ENCODE measurements at regions of chr20 and their contacts with region 1.

Region 1: DNA sequence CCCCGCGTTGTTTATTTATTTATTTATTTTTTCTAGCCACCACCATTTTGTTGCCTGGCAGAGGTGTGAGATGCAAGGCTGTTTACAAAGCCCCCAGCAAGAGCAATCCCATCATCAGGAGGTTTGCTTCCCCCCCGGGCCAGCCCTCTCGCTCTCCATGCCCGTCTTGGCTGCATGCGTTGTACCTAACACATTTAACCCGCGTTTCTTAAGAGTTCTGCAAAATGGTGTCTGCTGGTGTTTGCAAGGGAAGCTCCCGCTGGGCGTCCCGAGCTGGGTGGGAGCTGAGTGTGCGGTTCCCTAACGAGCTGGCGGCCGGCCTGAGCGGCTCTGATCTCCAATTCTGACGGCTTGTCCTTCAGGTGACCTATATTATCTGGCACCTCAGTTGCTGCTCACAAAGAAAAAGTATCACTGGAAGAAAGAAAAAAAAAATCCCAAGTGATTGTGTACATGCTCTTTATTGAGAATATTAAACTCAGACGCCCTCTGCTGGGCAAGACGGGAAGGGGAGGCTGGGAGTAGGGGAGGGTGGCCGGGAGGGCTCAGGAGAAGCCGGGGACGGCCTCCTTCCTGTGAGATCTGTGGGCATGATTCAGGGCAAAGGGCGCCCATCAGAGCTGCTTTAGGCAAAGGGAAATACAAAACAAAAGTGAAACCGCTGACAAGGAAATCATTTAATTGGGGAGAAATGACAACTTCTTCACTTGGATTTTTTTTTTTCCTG is 154.8 kb downstream of the BCAS1 start:
- DNase-seq: peak; percentile 94
- H3K4me3 ChIP-seq: peak overlapping the region; percentile 54
- H3K27ac ChIP-seq: peak overlapping the region; percentile 98
- H3K4me1 ChIP-seq: peaks cover 53% of the 10 kb centered on the region
- H3K27me3 ChIP-seq: no peaks in the 10 kb centered on the region
- CTCF ChIP-seq: peak; percentile 97

Region 2: DNA sequence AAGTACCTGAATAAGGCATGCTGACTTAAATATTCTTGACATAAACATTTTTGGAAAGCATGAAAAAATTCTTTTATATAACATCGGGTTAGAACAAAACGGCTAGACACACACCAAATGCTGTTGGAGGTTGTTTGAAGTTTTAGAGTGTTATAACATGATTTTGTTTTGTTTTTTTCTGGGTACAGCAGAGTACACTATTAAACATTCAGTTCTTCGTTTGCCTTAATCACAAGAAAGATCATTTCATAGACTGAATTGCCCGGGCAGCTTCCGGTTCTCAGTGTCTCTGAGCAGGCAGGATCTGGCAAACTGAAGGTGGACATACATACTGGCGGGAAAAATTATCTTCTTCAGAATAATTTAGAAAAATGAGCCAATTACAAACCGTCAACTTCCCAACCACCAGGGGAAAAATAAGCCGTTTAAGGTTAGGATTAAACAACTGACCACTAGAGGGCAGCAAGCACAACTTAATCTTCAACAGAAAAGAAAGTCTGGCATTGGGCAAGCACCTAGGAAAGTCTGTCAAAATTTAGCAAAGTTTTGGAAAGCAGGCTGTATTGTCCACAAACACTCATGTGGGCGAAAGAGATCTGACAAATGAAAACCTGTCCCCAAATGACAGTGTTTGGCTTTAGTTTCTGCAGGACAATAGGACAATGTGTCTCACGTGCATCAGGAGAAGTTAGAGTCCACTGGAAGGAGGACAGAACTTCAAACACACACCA is 337.0 kb before region 1 on chr20:
- CTCF ChIA-PET with region 1: interaction called, 4 read pairs
- POLR2A ChIA-PET with region 1: interaction called, 5 read pairs
- intact Hi-C with region 1: loop called (anchors 1 kb)
- DNase-seq: peak; percentile 94
- H3K4me3 ChIP-seq: peak overlapping the region; percentile 16
- H3K27ac ChIP-seq: peak overlapping the region; percentile 79
- H3K4me1 ChIP-seq: peaks cover 50% of the 10 kb centered on the region
- H3K27me3 ChIP-seq: no peaks in the 10 kb centered on the region
- CTCF ChIP-seq: peak; percentile 85

Region 3: DNA sequence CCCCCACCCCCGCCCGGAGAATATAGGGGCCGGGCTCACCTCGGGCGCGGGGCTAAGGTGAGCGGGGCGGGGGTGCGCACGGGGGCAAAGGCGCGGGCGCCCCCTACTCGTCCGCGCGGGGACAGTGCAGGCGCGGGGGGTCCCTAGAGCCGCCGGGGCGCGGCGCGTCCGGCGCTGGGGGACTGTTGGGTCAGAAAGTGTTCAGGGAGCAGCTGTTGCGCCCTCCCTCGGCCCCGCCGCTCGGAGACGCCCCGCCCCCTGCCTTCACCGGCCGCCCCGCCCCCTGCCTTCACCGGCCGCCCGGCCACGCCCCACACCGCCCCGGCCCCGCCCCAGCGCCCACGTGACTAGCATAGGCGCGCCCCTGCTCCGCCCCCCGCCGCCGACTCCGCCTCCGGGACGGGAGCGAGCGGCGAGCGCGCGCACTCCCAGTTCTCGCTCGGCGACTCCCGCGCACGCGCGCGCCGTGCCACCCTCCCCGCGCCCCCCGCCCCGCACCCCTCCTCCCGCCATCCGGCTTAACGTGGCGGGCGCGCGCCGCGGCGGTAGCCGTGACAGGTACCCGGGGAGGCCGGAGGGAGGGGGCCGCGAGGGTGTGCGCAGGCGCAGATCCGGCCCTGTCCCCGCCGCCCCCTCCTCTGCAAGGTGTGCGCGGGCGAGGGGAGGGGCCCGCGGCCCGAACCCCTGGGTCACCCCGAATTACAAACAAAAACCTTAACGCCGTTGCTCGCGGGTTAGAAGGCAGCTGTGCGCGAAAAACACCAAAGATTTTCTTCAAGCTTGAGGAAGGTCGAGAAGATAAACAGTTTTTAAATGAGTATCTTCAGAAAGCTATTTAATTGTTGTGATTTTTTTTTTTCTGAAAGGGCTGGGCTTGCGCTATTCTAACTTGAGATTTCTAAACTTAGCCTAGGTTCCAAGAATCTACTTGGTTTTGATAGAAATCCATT is 321.3 kb before region 1 on chr20:
- CTCF ChIA-PET with region 1: no interaction called
- POLR2A ChIA-PET with region 1: no interaction called
- intact Hi-C with region 1: loop called (anchors 5 kb)
- DNase-seq: peak; percentile 93
- H3K4me3 ChIP-seq: peak overlapping the region; percentile 79
- H3K27ac ChIP-seq: peak overlapping the region; percentile 86
- H3K4me1 ChIP-seq: peaks cover 47% of the 10 kb centered on the region
- H3K27me3 ChIP-seq: no peaks in the 10 kb centered on the region
- CTCF ChIP-seq: no peak

Region 4: GRCh38 chr20:53664113-53664850 is 251.3 kb before region 1 on chr20:
- CTCF ChIA-PET with region 1: interaction called, 13 read pairs
- POLR2A ChIA-PET with region 1: interaction called, 8 read pairs
- intact Hi-C with region 1: no loop called
- DNase-seq: peak; percentile 53
- H3K4me3 ChIP-seq: no peak overlapping the region
- H3K27ac ChIP-seq: peak overlapping the region; percentile 5
- H3K4me1 ChIP-seq: peaks cover 34% of the 10 kb centered on the region
- H3K27me3 ChIP-seq: no peaks in the 10 kb centered on the region
- CTCF ChIP-seq: no peak

Region 5: GRCh38 chr20:53750827-53751619 is 164.6 kb before region 1 on chr20:
- CTCF ChIA-PET with region 1: no interaction called
- POLR2A ChIA-PET with region 1: no interaction called
- intact Hi-C with region 1: loop called (anchors 10 kb)
- DNase-seq: peak; percentile 81
- H3K4me3 ChIP-seq: no peak overlapping the region
- H3K27ac ChIP-seq: peak overlapping the region; percentile 75
- H3K4me1 ChIP-seq: peaks cover 59% of the 10 kb centered on the region
- H3K27me3 ChIP-seq: no peaks in the 10 kb centered on the region
- CTCF ChIP-seq: no peak

Region 6: DNA sequence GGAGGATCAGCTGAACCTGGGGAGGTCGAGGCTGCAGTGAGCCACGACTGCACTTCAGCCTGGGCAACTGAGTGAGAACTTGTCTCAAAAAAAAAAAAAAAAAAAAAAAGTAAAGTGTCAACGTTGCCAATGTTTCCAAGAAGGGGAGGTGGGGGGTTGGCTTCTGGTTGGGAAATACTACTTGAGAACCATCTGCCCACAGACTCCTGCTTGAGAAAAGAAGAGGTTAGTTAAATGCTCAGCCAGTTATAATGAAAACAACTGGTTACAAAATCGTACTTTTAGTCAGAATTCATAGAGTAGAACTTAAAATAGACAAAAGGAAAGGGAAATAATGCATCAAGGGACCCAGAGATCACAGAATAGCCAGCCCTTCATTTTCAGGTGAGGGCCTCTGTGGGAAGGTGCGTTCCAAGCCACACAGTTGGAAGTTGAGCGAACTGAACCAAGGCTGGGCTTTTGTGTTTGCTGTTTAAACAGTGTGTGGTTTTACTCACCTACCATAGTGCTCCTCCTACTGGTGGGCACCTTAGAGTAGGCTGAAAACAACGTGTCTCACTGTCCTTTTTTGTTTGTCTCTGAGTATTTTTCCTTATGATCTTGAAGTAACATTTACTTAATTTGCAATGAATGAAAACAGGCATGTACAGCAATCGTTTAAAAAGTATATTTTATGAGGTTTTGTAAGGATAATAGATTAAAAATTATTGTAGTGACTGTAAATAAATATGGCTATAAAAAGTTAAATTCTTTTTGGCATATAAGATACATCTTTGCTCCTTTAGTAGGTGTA is 45.9 kb before region 1 on chr20:
- CTCF ChIA-PET with region 1: interaction called, 3 read pairs
- POLR2A ChIA-PET with region 1: no interaction called
- intact Hi-C with region 1: loop called (anchors 5 kb)
- DNase-seq: peak; percentile 84
- H3K4me3 ChIP-seq: no peak overlapping the region
- H3K27ac ChIP-seq: no peak overlapping the region
- H3K4me1 ChIP-seq: peaks cover 72% of the 10 kb centered on the region
- H3K27me3 ChIP-seq: no peaks in the 10 kb centered on the region
- CTCF ChIP-seq: peak; percentile 92